Sigmoid colon (tissue), 7 donors: ENCODE measurements at regions of chr14 and their contacts with region 1.

Region 1: GRCh38 chr14:75794615-75795038 is 133.6 kb downstream of the TTLL5 start:
- DNase-seq: no peak
- H3K4me3 ChIP-seq: no peak overlapping the region
- H3K27ac ChIP-seq: peak overlapping the region in 3 of 4 donors; percentile 31 to 57 (median 39)
- H3K4me1 ChIP-seq: peaks cover 0 to 10% (median 1%) of the 10 kb centered on the region in 4 donors
- H3K27me3 ChIP-seq: no peaks in the 10 kb centered on the region
- CTCF ChIP-seq: peak in 3 of 4 experiments; percentile 32 to 37 (median 34)
- EP300 ChIP-seq: no peak
- POLR2A ChIP-seq: no peak

Region 2: GRCh38 chr14:75411214-75411540 is 383.4 kb before region 1 on chr14:
- intact Hi-C with region 1: no loop called
- DNase-seq: no peak
- H3K4me3 ChIP-seq: no peak overlapping the region
- H3K27ac ChIP-seq: no peak overlapping the region
- H3K4me1 ChIP-seq: no peaks in the 10 kb centered on the region
- H3K27me3 ChIP-seq: no peaks in the 10 kb centered on the region
- CTCF ChIP-seq: no peak
- EP300 ChIP-seq: no peak
- POLR2A ChIP-seq: no peak

Region 3: DNA sequence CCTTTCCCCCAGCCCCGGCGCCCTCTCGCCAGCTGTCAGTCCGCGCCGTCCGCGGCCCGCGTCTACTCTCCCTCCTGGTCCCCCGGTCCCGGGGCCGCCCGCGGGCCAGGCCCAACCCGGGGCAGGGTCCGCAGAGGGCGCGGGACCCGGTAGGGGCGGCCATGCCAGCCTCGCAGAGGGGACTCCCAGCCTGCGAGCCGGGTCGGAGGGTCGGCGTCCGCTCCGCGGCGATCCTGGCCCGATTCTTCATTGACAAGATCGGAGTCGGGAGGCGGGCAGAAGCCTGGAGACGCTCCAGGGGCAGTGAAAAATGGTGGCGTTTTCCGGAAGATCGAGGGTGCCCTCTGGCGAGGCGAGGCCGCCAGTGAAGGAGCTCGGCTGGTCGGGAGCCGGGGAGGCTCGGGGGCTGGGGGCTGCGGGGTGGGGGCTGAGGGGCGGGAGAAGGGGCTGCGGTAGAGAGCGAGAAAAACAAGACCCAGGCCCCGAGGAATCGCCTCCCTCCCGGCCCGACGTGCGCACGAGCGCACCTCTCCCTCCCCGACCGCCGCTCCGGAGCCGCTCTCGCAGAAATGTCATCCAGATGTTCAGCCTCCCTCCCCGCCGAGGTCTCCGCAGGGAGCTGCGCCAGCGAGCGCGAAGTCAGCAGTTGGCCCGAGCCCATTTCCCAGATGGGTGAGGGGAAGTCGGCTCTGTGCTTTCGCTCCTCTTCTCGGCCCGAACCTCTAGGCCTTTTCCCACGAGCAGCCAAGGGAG is 187.8 kb after region 1 on chr14:
- intact Hi-C with region 1: loop called (anchors 1 kb)
- DNase-seq: peak; percentile 92
- H3K4me3 ChIP-seq: peak overlapping the region; percentile 60 to 81 (median 74)
- H3K27ac ChIP-seq: peak overlapping the region; percentile 94 to 99 (median 96)
- H3K4me1 ChIP-seq: peaks cover 0 to 68% (median 58%) of the 10 kb centered on the region in 4 donors
- H3K27me3 ChIP-seq: no peaks in the 10 kb centered on the region
- CTCF ChIP-seq: peak in 3 of 4 experiments; percentile 34 to 77 (median 47)
- EP300 ChIP-seq: no peak
- POLR2A ChIP-seq: no peak

Region 4: GRCh38 chr14:76191297-76191696 is 396.7 kb after region 1 on chr14:
- intact Hi-C with region 1: no loop called
- DNase-seq: peak; percentile 65
- H3K4me3 ChIP-seq: no peak overlapping the region
- H3K27ac ChIP-seq: no peak overlapping the region
- H3K4me1 ChIP-seq: no peaks in the 10 kb centered on the region
- H3K27me3 ChIP-seq: no peaks in the 10 kb centered on the region
- CTCF ChIP-seq: no peak
- EP300 ChIP-seq: no peak
- POLR2A ChIP-seq: no peak